Aorta (tissue), 5 donors: ENCODE measurements at regions of chr5 and their contacts with region 1.

Region 1: GRCh38 chr5:116574367-116575325 is at the start of gene SEMA6A:
- DNase-seq: peak; percentile 87 to 94
- ATAC-seq: peak; percentile 93
- H3K4me3 ChIP-seq: peak within 1 kb of the TSS; percentile 53 to 54
- H3K27ac ChIP-seq: no peak within 1 kb of the TSS
- H3K4me1 ChIP-seq: no peaks in the 10 kb centered on the region
- H3K27me3 ChIP-seq: no peaks in the 10 kb centered on the region
- total RNA-seq, gene SEMA6A: 19.8 to 28.5 TPM

Region 2: DNA sequence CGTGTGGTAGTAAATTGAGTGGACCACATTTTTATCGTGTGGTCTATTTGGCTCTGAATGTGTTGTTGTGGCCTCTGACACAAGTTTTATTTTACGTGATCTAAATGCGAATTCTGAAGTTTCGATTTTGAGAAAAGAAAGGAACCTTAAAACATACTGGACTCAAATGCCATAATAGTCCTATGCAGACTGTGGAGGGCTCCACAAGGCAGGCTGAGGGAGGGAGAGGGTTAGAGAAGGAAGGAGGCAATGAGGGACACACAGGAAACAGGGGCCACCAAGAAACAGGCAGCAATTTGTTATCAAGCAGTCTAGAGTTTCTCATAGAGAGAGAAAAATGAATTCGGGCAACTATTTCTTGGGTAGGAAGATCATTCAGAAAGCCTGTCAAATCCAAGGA is 110.4 kb after region 1 on chr5:
- intact Hi-C with region 1: no loop called
- DNase-seq: no peak
- ATAC-seq: no peak
- H3K4me3 ChIP-seq: no peak overlapping the region
- H3K27ac ChIP-seq: no peak overlapping the region
- H3K4me1 ChIP-seq: no peaks in the 10 kb centered on the region
- H3K27me3 ChIP-seq: no peaks in the 10 kb centered on the region

Region 3: DNA sequence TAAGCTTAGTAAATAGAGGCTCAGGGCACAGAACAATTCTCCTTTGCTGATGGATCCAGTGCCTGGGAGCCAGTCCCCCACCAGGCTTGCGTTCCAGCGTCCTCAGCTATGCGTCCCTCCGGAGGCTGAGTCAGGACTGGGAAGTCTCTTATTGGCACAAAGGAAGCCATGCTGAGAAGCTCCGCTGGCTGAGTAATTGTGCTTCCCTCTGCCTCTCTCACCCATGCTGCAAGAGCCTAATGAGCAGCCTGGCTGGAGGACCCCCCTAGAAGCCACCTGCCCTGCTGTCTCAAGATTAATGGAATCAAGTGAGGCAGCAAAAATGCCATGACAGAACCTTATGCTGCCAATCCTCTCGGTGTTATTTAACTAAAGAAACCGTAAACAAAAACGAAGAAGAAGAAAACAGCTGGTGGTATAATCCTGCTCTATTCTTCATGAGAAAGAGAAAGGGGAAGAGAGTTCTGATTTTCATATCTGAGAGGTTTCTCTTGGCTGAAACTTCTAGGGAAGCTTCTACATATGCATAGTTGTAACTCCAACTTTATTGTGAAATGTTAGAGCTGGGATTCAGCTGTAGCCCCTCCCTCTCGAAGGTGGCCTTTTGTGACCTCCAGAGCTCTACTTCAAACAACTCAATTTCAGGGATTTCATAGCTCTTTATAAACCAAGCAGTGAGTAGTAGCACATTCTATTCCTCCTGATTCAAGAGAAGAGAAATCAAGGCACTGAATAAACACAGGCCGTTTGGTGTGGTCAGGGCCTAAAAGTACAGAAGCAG is 185.4 kb after region 1 on chr5:
- intact Hi-C with region 1: loop called in 1 of 2 experiments (anchors 10 kb)
- DNase-seq: peak; percentile 55 to 85
- ATAC-seq: peak; percentile 84
- H3K4me3 ChIP-seq: no peak overlapping the region
- H3K27ac ChIP-seq: no peak overlapping the region
- H3K4me1 ChIP-seq: no peaks in the 10 kb centered on the region
- H3K27me3 ChIP-seq: no peaks in the 10 kb centered on the region

Region 4: DNA sequence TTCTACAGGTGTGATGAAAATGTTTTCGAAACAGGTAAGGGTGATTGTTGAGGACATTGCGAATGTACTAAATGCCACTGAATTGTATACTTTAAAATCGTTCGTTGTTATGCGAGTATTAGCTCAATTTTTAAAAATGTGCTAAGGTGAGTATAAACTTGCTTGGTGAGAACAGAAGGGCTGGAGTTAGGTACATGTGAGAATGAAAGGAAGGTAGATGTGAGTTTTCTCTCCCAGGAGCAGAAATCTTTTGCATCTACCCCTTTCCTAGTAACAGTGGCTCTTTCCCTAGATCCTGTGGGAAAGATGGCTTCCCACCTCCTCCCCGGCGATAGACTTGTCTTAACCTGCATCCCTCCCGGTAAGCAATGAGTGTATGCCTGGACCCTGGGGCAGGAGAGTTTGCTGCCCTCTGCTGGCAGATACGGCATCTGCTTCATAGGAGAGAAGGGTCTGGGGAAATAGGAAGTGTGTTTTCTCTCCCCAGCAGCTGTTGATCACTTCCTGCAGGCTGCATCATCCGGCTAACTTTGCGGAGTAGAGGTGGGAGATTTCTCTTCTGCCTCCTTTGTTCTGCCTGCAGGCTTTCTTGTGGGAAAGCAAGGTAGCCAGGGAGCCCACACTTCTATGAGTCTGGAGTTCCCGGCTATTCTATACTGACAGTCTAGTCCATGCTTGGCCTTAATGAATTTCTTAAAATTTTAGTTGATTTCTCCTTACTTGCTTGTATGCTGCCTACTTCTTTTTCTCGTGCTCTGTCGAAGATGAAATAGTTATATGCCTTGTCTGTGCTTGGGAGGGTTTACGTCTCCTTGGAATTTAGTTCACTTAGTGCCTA is 373.3 kb after region 1 on chr5:
- intact Hi-C with region 1: loop called in 1 of 2 experiments (anchors 10 kb)
- DNase-seq: peak; percentile 40 to 77
- ATAC-seq: no peak
- H3K4me3 ChIP-seq: no peak overlapping the region
- H3K27ac ChIP-seq: no peak overlapping the region
- H3K4me1 ChIP-seq: no peaks in the 10 kb centered on the region
- H3K27me3 ChIP-seq: no peaks in the 10 kb centered on the region